ENCODE measurements at regions of chr1 and their contacts with region 1.

Region 1: DNA sequence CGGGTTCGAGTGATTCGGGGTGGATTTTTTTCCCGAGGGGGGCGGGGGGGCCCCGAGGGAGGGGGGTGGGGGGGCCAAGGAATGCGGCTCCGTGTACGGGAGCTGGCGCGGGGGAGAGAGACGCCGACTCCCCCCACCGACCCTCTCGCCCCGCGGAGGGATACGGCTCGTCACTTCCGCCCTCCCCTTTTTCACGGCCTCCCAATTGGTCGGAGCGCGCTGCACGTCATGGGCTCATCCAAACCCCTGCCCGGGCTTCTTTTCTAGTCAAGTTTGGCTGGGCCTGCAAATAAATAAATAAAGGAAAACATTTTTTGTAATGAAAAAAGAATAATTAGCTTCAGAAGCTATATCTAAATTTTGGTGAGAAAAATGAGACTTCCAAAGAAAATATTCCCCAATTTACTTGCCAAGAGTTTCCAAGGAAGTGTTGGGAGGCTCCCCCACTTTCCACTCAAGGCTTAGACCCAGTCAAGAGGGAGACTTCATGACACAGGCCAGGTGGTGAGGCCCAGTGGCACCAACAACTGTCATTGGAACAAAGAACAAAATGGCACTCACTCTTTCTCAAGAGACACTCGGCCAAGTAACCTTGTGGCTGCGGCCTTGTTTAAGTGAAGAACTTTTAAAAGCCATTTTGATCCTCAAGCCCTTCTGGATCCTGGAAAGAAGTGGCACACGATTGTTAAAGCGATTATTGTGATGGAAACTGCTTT is at the start of gene POGZ:
- DNase-seq: peak; percentile 73 to 98
- H3K4me3 ChIP-seq: peak within 1 kb of the TSS; percentile 85 to 99
- H3K27ac ChIP-seq: peak within 1 kb of the TSS; percentile 98 to 100
- H3K4me1 ChIP-seq: peaks cover 4 to 17% of the 10 kb centered on the region in 2 donors
- H3K27me3 ChIP-seq: no peaks in the 10 kb centered on the region
- CTCF ChIP-seq: no peak
- total RNA-seq, gene POGZ: 18.1 TPM

Region 2: GRCh38 chr1:151472856-151473731 is 13.6 kb after region 1 on chr1:
- intact Hi-C with region 1: loop called (anchors 1 kb)
- DNase-seq: peak in 1 of 2 donors; percentile 70
- H3K4me3 ChIP-seq: peak overlapping the region; percentile 55 to 77
- H3K27ac ChIP-seq: peak overlapping the region; percentile 56 to 74
- H3K4me1 ChIP-seq: peaks cover 0 to 4% of the 10 kb centered on the region in 2 donors
- H3K27me3 ChIP-seq: no peaks in the 10 kb centered on the region
- CTCF ChIP-seq: no peak

Region 3: GRCh38 chr1:151539990-151540981 is 80.8 kb after region 1 on chr1 and contains the start of gene TUFT1:
- intact Hi-C with region 1: loop called (anchors 2 kb)
- DNase-seq: peak; percentile 84 to 97
- H3K4me3 ChIP-seq: peak within 1 kb of the TSS; percentile 63 to 79
- H3K27ac ChIP-seq: peak within 1 kb of the TSS; percentile 71 to 75
- H3K4me1 ChIP-seq: peaks cover 4 to 25% of the 10 kb centered on the region in 2 donors
- H3K27me3 ChIP-seq: no peaks in the 10 kb centered on the region
- CTCF ChIP-seq: no peak
- total RNA-seq, gene TUFT1: 2.3 TPM

Measured in ascending aorta (tissue), 2 donors.